ENCODE measurements at regions of chr15 and their contacts with region 1.

Region 1: GRCh38 chr15:51536965-51537574 is 85.5 kb downstream of the DMXL2 start:
- DNase-seq: peak; percentile 4
- H3K4me3 ChIP-seq: no peak overlapping the region
- CTCF ChIP-seq: peak; percentile 39

Region 2: GRCh38 chr15:51524376-51524775 is 12.7 kb before region 1 on chr15:
- CTCF ChIA-PET with region 1: interaction called, 20 read pairs
- POLR2A ChIA-PET with region 1: no interaction called
- DNase-seq: no peak
- H3K4me3 ChIP-seq: no peak overlapping the region
- CTCF ChIP-seq: no peak

Region 3: GRCh38 chr15:51550841-51551240 is 13.8 kb after region 1 on chr15:
- CTCF ChIA-PET with region 1: interaction called, 17 read pairs
- POLR2A ChIA-PET with region 1: no interaction called
- DNase-seq: no peak
- H3K4me3 ChIP-seq: no peak overlapping the region
- CTCF ChIP-seq: no peak

Region 4: DNA sequence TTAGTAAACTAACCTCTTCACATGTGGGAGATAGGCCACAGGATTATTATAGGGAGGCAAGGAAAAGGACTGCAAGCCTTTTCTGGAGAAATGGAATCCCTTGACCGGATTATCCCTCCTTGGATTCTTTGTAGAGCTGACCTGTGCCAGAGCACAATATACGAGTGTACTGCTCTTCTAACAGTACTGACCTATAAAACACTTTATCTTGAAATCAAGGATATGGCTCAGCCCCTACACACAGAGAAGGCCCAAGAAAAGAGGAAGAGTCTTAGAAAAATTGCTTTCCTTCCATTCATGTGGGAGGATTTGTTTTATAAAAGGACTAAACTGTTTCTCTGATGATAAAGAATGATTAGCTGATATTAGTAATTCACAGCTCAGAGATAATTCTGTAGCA is 43.3 kb after region 1 on chr15:
- CTCF ChIA-PET with region 1: no interaction called
- POLR2A ChIA-PET with region 1: no interaction called
- DNase-seq: no peak
- H3K4me3 ChIP-seq: no peak overlapping the region
- CTCF ChIP-seq: no peak

Region 5: DNA sequence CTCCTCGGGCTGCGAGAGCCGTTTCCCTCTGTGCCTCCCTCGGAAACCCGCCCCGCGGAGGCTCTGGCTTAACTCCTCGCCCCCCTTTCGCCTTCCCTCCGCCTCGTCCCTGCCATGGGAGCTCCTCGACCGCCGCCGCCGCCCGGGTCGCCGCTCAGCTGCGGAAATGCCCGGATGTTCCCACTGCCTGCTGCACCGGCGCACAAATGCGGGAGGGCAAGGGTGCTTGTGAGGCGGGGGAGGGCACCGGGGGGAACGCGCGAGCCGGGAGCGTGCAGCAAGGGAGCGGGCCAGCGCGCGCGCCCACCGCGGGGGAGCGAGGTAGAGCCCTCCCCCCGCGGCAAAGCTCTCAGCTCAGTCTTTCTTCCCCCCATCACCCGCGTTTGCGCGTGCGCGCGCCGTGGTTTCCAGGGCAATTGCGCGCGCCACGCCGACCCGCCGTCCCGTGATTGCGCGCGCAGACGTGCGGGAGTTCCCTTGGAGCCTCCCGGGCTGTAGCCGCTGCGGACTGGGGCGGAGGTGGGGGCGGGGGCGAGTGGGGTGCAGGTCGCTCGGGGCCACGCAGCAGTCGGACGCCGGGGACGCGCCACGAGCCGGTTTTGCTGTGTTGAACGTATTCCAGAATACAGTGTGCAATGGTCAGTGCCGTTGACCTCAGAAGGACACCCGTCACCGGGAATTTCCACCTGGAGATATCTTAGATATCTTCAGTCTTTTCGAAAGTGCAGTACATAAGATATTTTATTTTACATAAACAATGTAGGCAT is 85.7 kb after region 1 on chr15 and contains the start of gene DMXL2:
- CTCF ChIA-PET with region 1: interaction called, 14 read pairs
- POLR2A ChIA-PET with region 1: no interaction called
- DNase-seq: no peak
- H3K4me3 ChIP-seq: peak within 1 kb of the TSS; percentile 90
- CTCF ChIP-seq: no peak